Left ventricle myocardium inferior (tissue), 1 donor: ENCODE measurements at regions of chr9 and their contacts with region 1.

Region 1: DNA sequence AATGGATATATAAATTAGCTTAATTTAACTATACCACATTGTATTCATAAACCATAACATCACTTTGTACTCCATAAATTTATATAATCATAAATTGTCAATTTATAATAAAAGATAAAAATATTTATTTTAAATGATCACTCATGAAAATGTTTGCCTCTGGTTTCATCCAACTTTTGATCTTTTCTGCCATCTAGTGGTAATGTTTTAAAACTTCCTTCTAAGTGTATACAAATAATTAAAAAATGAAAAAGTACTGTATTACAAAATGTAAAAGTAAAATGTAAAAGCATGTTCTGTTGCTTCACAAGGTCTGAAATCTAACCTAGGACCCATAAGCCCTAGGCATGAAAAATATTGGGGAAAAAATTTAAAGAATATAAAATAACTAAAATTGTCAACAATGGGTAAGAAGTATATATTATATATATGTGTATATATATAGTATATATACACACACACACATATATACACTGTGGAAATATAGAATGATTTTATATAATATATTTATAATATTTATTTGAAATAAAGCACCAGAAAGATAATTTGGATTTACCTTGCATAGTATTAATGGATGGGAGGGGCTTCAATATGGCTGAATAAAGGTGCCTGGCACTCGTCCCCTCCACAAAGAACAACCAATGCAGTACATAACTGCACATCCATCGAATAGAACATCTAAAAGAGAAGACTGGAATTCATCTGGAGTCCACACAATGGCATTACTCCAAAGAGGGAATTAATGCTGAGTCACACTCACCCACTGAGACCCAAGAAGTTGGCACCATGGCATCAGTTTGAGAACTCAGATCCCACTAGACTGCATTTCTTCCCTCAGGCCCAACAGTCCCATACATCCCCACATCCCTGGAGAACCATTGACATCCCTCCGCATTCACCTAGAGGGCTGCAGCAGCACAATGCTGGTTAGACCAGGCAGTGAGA is 32.5 kb downstream of the ANXA1 start:
- DNase-seq: no peak
- H3K4me3 ChIP-seq: no peak overlapping the region
- H3K27ac ChIP-seq: no peak overlapping the region
- H3K4me1 ChIP-seq: no peaks in the 10 kb centered on the region
- H3K27me3 ChIP-seq: no peaks in the 10 kb centered on the region
- CTCF ChIP-seq: peak; percentile 71

Region 2: GRCh38 chr9:72856972-72857623 is 327.1 kb before region 1 on chr9:
- intact Hi-C with region 1: loop called (anchors 5 kb)
- DNase-seq: no peak
- H3K4me3 ChIP-seq: no peak overlapping the region
- H3K27ac ChIP-seq: peak overlapping the region; percentile 25
- H3K4me1 ChIP-seq: peaks cover 21% of the 10 kb centered on the region
- H3K27me3 ChIP-seq: no peaks in the 10 kb centered on the region
- CTCF ChIP-seq: peak; percentile 74

Region 3: GRCh38 chr9:72978744-72979143 is 205.4 kb before region 1 on chr9:
- intact Hi-C with region 1: no loop called
- DNase-seq: no peak
- H3K4me3 ChIP-seq: no peak overlapping the region
- H3K27ac ChIP-seq: no peak overlapping the region
- H3K4me1 ChIP-seq: no peaks in the 10 kb centered on the region
- H3K27me3 ChIP-seq: no peaks in the 10 kb centered on the region
- CTCF ChIP-seq: no peak

Region 4: DNA sequence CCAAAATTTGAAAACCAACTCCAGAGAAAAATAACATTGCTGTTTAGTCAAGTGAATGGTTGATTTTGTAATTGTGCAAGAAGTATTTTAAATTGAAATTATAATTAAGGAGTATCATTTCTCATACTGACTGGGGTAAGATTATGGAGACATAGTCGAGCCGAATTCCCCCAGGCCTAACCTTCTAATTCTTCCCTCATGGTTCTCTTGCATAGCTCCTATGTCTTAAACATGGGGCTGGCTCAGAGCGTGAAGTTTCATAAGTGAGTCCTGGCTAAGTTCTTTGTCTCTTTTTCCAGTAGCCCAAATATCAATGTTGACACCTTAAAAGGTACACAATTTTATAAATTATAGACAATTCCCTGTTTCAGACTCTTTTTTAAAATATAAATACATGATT is 79.3 kb before region 1 on chr9:
- intact Hi-C with region 1: loop called (anchors 5 kb)
- DNase-seq: no peak
- H3K4me3 ChIP-seq: no peak overlapping the region
- H3K27ac ChIP-seq: no peak overlapping the region
- H3K4me1 ChIP-seq: no peaks in the 10 kb centered on the region
- H3K27me3 ChIP-seq: no peaks in the 10 kb centered on the region
- CTCF ChIP-seq: no peak